ENCODE measurements at regions of chr20 and their contacts with region 1.

Region 1: GRCh38 chr20:8722276-8722928 is 346.5 kb upstream of the PLCB4 start:
- DNase-seq: no peak
- H3K4me3 ChIP-seq: no peak overlapping the region
- H3K27ac ChIP-seq: no peak overlapping the region
- H3K4me1 ChIP-seq: peaks cover 0 to 23% (median 17%) of the 10 kb centered on the region in 4 donors
- H3K27me3 ChIP-seq: no peaks in the 10 kb centered on the region
- CTCF ChIP-seq: peak; percentile 75 to 83 (median 78)
- EP300 ChIP-seq: no peak
- POLR2A ChIP-seq: no peak

Region 2: DNA sequence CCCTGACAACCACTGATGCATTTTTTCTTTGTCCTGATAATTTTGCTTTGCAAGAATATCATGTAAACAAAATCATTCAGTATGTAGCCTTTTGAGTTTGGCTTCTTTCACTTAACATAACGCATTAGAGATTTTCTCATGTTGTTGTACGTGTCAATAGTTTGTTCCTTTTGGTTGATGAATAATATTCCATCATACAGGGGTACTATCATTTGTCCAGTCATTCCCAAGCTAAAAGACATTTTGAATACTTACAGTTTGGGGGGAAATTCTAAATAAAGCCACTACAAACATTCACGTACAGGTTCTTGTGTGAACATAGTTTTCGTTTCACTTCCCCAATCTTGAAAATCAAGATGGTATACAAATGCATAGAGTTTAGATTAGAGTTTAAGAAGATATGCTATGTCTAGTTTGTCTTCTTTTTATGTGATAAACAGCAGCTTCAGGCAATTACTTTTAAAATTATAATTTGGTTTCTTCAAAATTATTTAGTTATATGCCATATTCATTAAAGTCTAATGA is 787.3 kb before region 1 on chr20:
- intact Hi-C with region 1: loop called (anchors 2 kb)
- DNase-seq: no peak
- H3K4me3 ChIP-seq: no peak overlapping the region
- H3K27ac ChIP-seq: no peak overlapping the region
- H3K4me1 ChIP-seq: peaks cover 0 to 8% (median 3%) of the 10 kb centered on the region in 4 donors
- H3K27me3 ChIP-seq: no peaks in the 10 kb centered on the region
- CTCF ChIP-seq: no peak
- EP300 ChIP-seq: no peak
- POLR2A ChIP-seq: no peak

Region 3: GRCh38 chr20:7980332-7981046 is 741.9 kb before region 1 on chr20:
- intact Hi-C with region 1: loop called (anchors 5 kb)
- DNase-seq: no peak
- H3K4me3 ChIP-seq: no peak overlapping the region
- H3K27ac ChIP-seq: no peak overlapping the region
- H3K4me1 ChIP-seq: no peaks in the 10 kb centered on the region
- H3K27me3 ChIP-seq: no peaks in the 10 kb centered on the region
- CTCF ChIP-seq: peak; percentile 11 to 61 (median 28)
- EP300 ChIP-seq: no peak
- POLR2A ChIP-seq: no peak

Region 4: DNA sequence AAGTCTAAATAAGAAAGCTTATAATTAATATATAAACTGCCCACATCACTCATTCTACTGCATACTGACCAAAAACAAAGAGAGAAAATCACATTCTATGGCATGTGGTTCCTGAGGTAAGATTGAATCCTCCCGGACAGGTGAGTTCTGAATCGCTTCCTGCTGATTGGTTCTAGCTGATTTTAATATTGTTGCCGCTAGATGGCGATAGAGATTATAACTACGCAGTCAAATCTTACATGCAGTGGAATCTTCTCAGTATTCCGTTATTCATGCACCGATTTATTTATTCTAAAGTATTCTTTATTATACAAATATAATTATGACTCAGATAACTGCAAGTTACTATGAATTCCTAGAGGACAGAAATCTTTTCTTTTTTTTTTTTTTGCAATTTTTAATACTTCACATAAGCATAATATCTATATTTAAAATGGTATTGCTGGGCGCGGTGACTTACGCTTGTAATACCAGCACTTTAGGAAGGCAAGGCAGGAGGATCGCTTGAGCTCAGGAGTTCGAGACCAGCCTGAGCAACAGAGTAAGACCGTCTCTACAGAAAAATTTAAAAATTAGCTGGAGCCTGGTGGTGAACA is 678.6 kb before region 1 on chr20:
- intact Hi-C with region 1: loop called (anchors 2 kb)
- DNase-seq: no peak
- H3K4me3 ChIP-seq: no peak overlapping the region
- H3K27ac ChIP-seq: no peak overlapping the region
- H3K4me1 ChIP-seq: no peaks in the 10 kb centered on the region
- H3K27me3 ChIP-seq: no peaks in the 10 kb centered on the region
- CTCF ChIP-seq: peak; percentile 60 to 80 (median 70)
- EP300 ChIP-seq: no peak
- POLR2A ChIP-seq: no peak

Region 5: GRCh38 chr20:8131598-8132483 is 590.6 kb before region 1 on chr20 and contains the start of gene PLCB1:
- intact Hi-C with region 1: loop called (anchors 1 kb)
- DNase-seq: peak; percentile 96
- H3K4me3 ChIP-seq: peak within 1 kb of the TSS; percentile 66 to 97 (median 94)
- H3K27ac ChIP-seq: peak within 1 kb of the TSS; percentile 90 to 93 (median 91)
- H3K4me1 ChIP-seq: peaks cover 0 to 75% (median 60%) of the 10 kb centered on the region in 4 donors
- H3K27me3 ChIP-seq: no peaks in the 10 kb centered on the region
- CTCF ChIP-seq: peak; percentile 77 to 89 (median 83)
- EP300 ChIP-seq: no peak
- POLR2A ChIP-seq: no peak
- total RNA-seq, gene PLCB1: 86.7 to 117 (median 102) TPM

Region 6: GRCh38 chr20:8389381-8390036 is 332.9 kb before region 1 on chr20:
- intact Hi-C with region 1: loop called (anchors 5 kb)
- DNase-seq: no peak
- H3K4me3 ChIP-seq: no peak overlapping the region
- H3K27ac ChIP-seq: peak overlapping the region in 1 of 4 donors; percentile 2
- H3K4me1 ChIP-seq: peaks cover 0 to 34% (median 32%) of the 10 kb centered on the region in 4 donors
- H3K27me3 ChIP-seq: no peaks in the 10 kb centered on the region
- CTCF ChIP-seq: peak; percentile 25 to 60 (median 42)
- EP300 ChIP-seq: no peak
- POLR2A ChIP-seq: no peak

Region 7: GRCh38 chr20:8756410-8756809 is 34.0 kb after region 1 on chr20:
- intact Hi-C with region 1: no loop called
- DNase-seq: peak; percentile 72
- H3K4me3 ChIP-seq: no peak overlapping the region
- H3K27ac ChIP-seq: peak overlapping the region; percentile 50 to 68 (median 56)
- H3K4me1 ChIP-seq: peaks cover 0 to 18% (median 14%) of the 10 kb centered on the region in 4 donors
- H3K27me3 ChIP-seq: no peaks in the 10 kb centered on the region
- CTCF ChIP-seq: no peak
- EP300 ChIP-seq: no peak
- POLR2A ChIP-seq: no peak

Measured in sigmoid colon (tissue), 7 donors.